ENCODE measurements at regions of chr5 and their contacts with region 1.

Region 1: GRCh38 chr5:126536874-126537273 is 58.1 kb downstream of the ALDH7A1 start:
- DNase-seq: no peak
- H3K4me3 Mint-ChIP-seq: no peak overlapping the region
- H3K27ac Mint-ChIP-seq: no peak overlapping the region
- H3K4me1 Mint-ChIP-seq: no peaks in the 10 kb centered on the region
- H3K27me3 Mint-ChIP-seq: no peaks in the 10 kb centered on the region

Region 2: DNA sequence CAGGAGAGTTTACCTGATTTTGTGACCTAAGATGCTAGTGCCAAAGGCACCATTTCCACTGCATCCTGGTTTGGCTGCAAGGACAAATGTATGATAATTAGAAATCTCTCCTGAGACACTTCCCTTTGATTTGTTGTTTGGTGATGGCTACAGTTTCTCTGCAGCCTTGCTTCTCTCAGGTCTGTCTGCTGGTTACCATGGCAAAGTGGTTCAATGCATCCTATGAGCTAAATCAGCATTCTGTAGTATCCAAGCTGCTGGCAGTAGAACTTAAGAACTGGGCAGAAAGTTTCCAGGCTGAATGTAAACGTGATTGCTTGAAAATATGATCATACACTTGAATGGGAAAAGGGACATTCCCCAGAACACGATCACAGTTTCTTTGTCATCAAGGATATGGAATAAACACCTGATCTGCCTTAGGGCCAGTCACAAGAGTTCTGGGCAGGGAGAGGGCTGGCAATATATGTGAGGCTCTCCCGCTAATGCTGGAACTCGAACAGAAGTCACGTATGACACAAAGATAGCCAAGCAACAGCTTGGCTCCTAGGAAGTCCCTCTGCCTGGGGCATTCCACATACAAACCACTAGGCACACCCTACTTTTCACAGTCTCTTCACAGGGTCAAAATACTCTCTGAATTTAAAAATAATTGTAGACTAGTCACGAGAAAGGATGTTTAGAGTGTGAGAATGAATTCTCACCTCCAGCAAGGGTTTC is 251.7 kb before region 1 on chr5:
- CTCF ChIA-PET with region 1: no interaction called
- POLR2A ChIA-PET with region 1: no interaction called
- intact Hi-C with region 1: no loop called
- DNase-seq: no peak
- H3K4me3 Mint-ChIP-seq: no peak overlapping the region
- H3K27ac Mint-ChIP-seq: no peak overlapping the region
- H3K4me1 Mint-ChIP-seq: no peaks in the 10 kb centered on the region
- H3K27me3 Mint-ChIP-seq: no peaks in the 10 kb centered on the region

Region 3: GRCh38 chr5:126339215-126339805 is 197.6 kb before region 1 on chr5:
- CTCF ChIA-PET with region 1: interaction called, 119 read pairs
- POLR2A ChIA-PET with region 1: interaction called, 4 read pairs
- intact Hi-C with region 1: loop called (anchors 1 kb)
- DNase-seq: peak; percentile 29
- H3K4me3 Mint-ChIP-seq: no peak overlapping the region
- H3K27ac Mint-ChIP-seq: no peak overlapping the region
- H3K4me1 Mint-ChIP-seq: no peaks in the 10 kb centered on the region
- H3K27me3 Mint-ChIP-seq: peaks cover 12% of the 10 kb centered on the region

Region 4: DNA sequence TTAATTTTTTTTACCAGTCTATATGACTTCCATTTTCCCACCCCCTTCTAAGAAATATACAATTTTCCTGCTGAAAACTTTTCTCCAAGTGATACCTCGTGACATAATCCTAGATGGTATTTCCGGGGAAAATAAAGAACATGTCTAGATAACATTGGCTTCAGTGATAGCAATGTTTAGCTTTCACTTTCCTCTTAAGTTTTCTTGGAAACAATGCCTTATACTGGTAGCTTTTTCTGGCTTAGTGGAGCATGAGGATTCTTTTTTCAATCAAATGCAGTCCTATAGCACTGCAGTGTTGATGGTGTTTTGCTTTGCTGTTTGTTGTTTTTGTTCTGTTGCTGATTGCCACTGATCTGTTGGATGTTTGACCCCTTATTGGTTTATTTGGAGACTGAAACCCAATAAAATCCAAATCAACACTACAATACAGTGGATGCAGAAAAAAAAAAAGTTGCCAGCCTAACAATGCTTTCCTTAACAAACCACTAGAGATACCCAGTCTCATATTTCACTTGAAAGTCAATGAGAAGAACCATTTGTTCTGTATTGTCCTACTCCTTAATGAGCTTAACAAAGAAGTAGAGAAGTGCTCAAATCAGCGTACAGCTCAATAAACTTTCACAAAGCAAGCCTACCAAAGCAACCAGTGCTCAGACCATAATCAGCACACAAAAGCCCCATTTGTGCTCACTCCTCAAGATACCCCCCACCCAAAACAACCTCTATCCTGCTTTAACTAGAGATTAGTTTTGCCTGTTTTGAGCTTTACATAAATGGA is 187.8 kb before region 1 on chr5:
- CTCF ChIA-PET with region 1: interaction called, 111 read pairs
- POLR2A ChIA-PET with region 1: no interaction called
- intact Hi-C with region 1: loop called (anchors 1 kb)
- DNase-seq: no peak
- H3K4me3 Mint-ChIP-seq: no peak overlapping the region
- H3K27ac Mint-ChIP-seq: no peak overlapping the region
- H3K4me1 Mint-ChIP-seq: peaks cover 2% of the 10 kb centered on the region
- H3K27me3 Mint-ChIP-seq: peaks cover 17% of the 10 kb centered on the region

Region 5: DNA sequence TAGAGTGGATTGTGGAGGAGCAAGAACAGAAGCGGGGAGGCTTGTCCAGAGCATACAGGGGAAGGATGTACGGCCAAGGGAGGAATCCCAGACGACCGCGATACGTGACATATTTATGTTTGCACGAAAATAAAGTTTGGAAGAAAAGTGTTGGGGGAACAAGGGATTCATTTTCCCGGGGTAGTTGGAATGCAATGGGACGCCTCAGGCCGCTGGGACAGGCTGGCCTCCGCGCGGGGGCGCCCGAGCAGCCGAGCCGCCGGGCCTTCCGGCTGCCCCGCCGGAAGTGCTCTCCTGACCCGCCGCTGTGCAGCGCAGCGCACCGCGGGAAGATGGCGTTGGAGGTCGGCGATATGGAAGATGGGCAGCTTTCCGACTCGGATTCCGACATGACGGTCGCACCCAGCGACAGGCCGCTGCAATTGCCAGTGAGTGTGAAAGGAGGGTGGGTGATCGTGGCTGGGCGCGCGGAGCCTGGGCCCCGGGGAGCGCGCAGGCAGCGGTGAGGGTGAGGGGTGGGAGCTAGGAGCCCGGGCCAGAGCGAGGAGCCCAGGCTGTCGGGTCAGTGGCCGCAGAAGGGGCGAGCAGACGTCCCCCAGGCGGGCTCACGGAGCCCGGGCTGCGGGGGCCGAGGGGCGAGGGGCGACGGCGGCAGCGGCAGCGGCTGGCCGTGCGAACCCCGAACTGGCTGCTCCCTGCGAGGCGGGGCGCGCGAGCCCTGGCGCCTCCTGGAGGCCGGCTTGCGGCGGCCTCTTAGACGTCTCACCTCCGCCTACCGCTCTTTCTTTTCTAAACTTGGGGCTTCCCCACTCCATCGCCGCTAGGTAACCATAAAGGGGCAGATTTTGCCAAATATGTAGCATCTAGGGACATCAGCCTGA is 64.0 kb after region 1 on chr5 and contains the start of gene PHAX:
- CTCF ChIA-PET with region 1: interaction called, 12 read pairs
- POLR2A ChIA-PET with region 1: no interaction called
- intact Hi-C with region 1: no loop called
- DNase-seq: peak; percentile 82
- H3K4me3 Mint-ChIP-seq: peak within 1 kb of the TSS; percentile 99
- H3K27ac Mint-ChIP-seq: peak within 1 kb of the TSS; percentile 97
- H3K4me1 Mint-ChIP-seq: peaks cover 35% of the 10 kb centered on the region
- H3K27me3 Mint-ChIP-seq: no peaks in the 10 kb centered on the region
- total RNA-seq, gene PHAX: 40.7 to 43.2 TPM